CD8-positive, alpha-beta memory T cell (primary cell): ENCODE measurements at regions of chr16 and their contacts with region 1.

Region 1: DNA sequence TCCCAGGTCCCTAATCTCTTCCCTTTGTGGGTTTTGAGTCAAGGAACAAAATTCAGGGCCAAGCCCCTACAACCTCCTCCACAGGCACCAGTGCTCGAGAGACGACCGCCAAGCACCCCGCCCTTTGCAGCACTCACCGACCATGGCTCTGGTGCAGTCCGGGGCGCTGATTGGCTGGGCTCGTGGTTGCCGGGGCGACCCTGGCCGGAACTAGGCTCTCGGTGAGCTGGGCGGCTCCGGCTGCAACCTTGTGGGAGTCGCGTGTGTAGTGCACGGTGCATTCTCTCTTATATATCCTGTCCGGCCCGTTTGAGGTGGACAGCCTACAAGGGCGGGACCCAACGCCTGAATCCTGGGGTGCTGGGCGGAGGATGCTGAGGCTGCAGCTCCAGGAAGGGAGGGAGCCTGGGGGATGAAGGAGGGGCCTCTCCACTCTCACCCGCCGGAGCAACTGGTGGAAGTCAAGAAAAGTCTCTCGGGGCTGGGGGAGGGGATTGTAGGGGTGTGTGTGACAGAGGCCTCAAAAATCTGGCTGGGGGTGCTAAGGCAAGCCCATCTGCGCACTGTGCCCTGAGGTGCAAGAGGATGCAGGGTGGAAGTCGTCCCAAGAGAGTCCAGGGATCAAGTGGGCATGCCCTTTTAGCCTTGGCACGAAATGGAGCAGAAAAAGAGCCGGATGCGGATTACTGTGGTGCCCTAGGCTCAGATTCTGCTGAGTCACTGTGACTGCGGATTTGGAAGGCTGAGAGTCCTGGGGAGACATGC is at the start of gene NQO1:
- DNase-seq: peak; percentile 68 to 90 (median 80)
- H3K4me3 ChIP-seq: peak within 1 kb of the TSS; percentile 74
- H3K4me3 Mint-ChIP-seq: peak within 1 kb of the TSS; percentile 83 to 96 (median 93)
- H3K27ac ChIP-seq: peak within 1 kb of the TSS; percentile 74
- H3K27ac Mint-ChIP-seq: peak within 1 kb of the TSS; percentile 72 to 96 (median 92)
- H3K4me1 ChIP-seq: peaks cover 16% of the 10 kb centered on the region
- H3K4me1 Mint-ChIP-seq: peaks cover 16 to 31% (median 17%) of the 10 kb centered on the region in 3 donors
- H3K27me3 ChIP-seq: no peaks in the 10 kb centered on the region
- H3K27me3 Mint-ChIP-seq: no peaks in the 10 kb centered on the region
- total RNA-seq, gene NQO1: 16.0 to 16.9 TPM

Region 2: DNA sequence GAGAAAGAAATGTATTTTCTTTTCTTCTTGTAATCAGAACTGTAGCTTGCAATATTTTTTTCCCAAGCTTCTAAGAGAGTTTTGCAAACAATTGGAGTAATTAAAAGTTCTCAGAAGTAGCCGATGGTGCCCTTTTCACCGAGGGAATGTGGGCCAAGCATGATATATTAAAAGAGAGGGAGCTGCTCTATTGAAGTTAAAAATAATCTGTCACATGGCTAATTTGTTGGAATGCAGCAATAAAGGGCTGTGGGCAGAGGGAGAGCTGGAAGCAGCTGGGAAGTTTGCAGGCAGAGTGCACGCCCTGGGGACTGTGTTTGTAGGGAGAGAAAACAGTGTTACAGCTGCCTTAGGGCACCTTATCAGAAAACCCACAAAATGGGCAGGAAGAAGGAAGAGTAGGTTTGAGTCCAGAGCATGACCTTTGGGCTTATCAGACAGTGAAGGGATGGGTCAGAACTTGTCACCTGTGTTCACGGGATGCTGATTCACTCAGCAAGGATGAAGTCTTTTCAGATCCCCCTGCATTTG is 322.1 kb before region 1 on chr16:
- CTCF ChIA-PET with region 1: no interaction called
- POLR2A ChIA-PET with region 1: no interaction called
- DNase-seq: no peak
- H3K4me3 ChIP-seq: no peak overlapping the region
- H3K4me3 Mint-ChIP-seq: no peak overlapping the region
- H3K27ac ChIP-seq: no peak overlapping the region
- H3K27ac Mint-ChIP-seq: no peak overlapping the region
- H3K4me1 ChIP-seq: no peaks in the 10 kb centered on the region
- H3K4me1 Mint-ChIP-seq: no peaks in the 10 kb centered on the region
- H3K27me3 ChIP-seq: no peaks in the 10 kb centered on the region
- H3K27me3 Mint-ChIP-seq: peaks cover 2 to 3% of the 10 kb centered on the region in 2 donors

Region 3: GRCh38 chr16:69709456-69710084 is 16.9 kb before region 1 on chr16:
- CTCF ChIA-PET with region 1: interaction called, 16 read pairs
- POLR2A ChIA-PET with region 1: no interaction called
- DNase-seq: peak in 2 of 5 donors; percentile 44 to 58
- H3K4me3 ChIP-seq: no peak overlapping the region
- H3K4me3 Mint-ChIP-seq: no peak overlapping the region
- H3K27ac ChIP-seq: no peak overlapping the region
- H3K27ac Mint-ChIP-seq: peak overlapping the region in 5 of 8 donors; percentile 0 to 79 (median 31)
- H3K4me1 ChIP-seq: no peaks in the 10 kb centered on the region
- H3K4me1 Mint-ChIP-seq: peaks cover 0 to 6% (median 5%) of the 10 kb centered on the region in 3 donors
- H3K27me3 ChIP-seq: no peaks in the 10 kb centered on the region
- H3K27me3 Mint-ChIP-seq: no peaks in the 10 kb centered on the region

Region 4: GRCh38 chr16:69747115-69747514 is 20.6 kb after region 1 on chr16:
- CTCF ChIA-PET with region 1: no interaction called
- POLR2A ChIA-PET with region 1: no interaction called
- DNase-seq: no peak
- H3K4me3 ChIP-seq: no peak overlapping the region
- H3K4me3 Mint-ChIP-seq: no peak overlapping the region
- H3K27ac ChIP-seq: no peak overlapping the region
- H3K27ac Mint-ChIP-seq: peak overlapping the region in 1 of 8 donors; percentile 44
- H3K4me1 ChIP-seq: no peaks in the 10 kb centered on the region
- H3K4me1 Mint-ChIP-seq: peaks cover 1 to 11% (median 2%) of the 10 kb centered on the region in 3 donors
- H3K27me3 ChIP-seq: no peaks in the 10 kb centered on the region
- H3K27me3 Mint-ChIP-seq: no peaks in the 10 kb centered on the region